Dendritic cell treated with granulocyte-macrophage colony-stimulating factor and Interleukin-4, amounts not matched to agents 40 ng/mL and 50 ng/mL, for 4 days (primary cell): ENCODE measurements at regions of chr16 and their contacts with region 1.

Region 1: GRCh38 chr16:4475880-4476788 is at the start of gene HMOX2:
- H3K4me3 Mint-ChIP-seq: peak within 1 kb of the TSS; percentile 84
- H3K27ac Mint-ChIP-seq: peak within 1 kb of the TSS; percentile 86
- H3K4me1 Mint-ChIP-seq: peaks cover 36% of the 10 kb centered on the region
- H3K27me3 Mint-ChIP-seq: no peaks in the 10 kb centered on the region

Region 2: DNA sequence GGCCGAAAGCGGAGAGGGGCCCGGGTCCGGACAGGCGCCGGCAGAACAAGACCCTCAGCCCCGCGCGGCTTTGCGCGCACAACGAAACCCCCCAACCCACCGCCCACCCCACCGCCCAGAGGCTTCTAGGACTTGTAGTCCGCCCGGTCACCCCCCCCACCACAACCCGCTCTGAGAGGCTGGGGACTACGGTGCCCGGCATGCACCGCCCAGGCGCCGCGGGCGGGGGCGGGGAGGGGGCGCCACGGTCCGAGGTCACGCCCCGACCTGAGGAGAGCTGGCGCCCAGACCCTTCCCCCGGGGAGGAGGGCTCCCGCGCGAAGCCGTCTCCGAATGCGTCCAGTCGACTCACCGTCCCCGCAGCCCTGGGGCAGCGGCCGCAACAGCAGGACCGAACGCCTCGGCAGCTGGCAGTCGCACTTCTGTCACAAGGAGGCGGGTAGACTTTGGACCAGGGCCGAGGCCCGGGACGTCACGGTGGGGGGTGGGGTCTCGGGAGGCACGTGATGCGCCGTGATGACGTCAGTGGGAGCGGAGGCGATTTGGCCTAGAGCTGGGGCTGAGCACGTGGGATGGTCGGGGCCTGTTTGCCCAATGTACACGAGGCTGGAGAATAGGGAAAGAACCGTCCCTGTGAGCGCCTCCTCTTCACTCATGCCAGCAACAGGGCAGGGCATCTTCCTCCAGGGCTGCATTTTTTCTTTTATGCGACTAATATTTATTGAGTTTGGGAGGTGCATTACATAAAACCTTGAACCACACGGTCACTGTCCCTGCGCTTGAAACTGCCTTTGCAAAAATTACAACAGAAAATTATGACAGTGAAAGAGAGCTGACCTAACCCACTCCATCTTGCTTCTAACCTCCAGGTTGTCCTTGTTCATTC is 62.5 kb after region 1 on chr16 and contains the start of gene CDIP1:
- intact Hi-C with region 1: loop called (anchors 2 kb)
- H3K4me3 Mint-ChIP-seq: peak within 1 kb of the TSS; percentile 72
- H3K27ac Mint-ChIP-seq: peak within 1 kb of the TSS; percentile 84
- H3K4me1 Mint-ChIP-seq: peaks cover 31% of the 10 kb centered on the region
- H3K27me3 Mint-ChIP-seq: peaks cover 11% of the 10 kb centered on the region

Region 3: GRCh38 chr16:4556112-4556511 is 80.0 kb after region 1 on chr16 and contains the start of gene C16orf96:
- intact Hi-C with region 1: no loop called
- H3K4me3 Mint-ChIP-seq: no peak within 1 kb of the TSS
- H3K27ac Mint-ChIP-seq: no peak within 1 kb of the TSS
- H3K4me1 Mint-ChIP-seq: no peaks in the 10 kb centered on the region
- H3K27me3 Mint-ChIP-seq: peaks cover 13% of the 10 kb centered on the region